WTC11 (cell line): ENCODE measurements at regions of chr22 and their contacts with region 1.

Region 1: DNA sequence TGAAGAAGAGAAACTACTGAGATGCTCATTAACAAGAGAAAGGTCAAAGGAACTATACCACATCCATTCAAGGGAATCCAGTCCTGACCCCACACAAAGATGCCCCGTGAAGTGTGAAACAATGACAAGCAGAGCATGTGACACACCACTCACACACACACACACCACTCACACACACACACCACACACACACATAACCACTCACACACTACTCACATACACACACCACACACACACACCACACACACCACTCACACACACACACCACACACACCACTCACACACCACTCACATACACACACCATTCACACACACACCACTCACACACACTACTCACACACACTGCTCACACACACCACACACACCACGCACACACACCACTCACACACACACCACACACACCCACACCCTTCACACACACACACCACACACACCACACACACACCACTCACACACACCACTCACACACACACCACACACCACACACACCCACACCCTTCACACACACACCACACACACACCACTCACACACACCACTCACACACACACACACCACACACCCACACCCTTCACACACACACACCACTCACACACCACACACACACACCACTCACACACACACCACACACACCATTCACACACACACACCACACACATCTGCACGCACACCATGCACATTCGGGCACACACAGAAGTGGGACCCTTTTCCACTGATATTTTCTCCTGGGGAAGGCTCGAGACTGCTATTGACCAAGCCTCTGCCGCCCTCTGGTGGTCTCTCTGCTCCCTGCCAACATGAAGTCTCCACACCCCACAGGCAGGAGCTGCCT is 32.0 kb upstream of the COMT start:
- DNase-seq: peak; percentile 90
- ATAC-seq: peak; percentile 87
- H3K4me3 Mint-ChIP-seq: no peak overlapping the region
- H3K27ac Mint-ChIP-seq: no peak overlapping the region; the same call in 1 of the 2 replicates
- H3K4me1 Mint-ChIP-seq: no peaks in the 10 kb centered on the region; the same call in 1 of the 2 replicates
- H3K27me3 Mint-ChIP-seq: no peaks in the 10 kb centered on the region
- CTCF ChIP-seq: peak; percentile 80

Region 2: DNA sequence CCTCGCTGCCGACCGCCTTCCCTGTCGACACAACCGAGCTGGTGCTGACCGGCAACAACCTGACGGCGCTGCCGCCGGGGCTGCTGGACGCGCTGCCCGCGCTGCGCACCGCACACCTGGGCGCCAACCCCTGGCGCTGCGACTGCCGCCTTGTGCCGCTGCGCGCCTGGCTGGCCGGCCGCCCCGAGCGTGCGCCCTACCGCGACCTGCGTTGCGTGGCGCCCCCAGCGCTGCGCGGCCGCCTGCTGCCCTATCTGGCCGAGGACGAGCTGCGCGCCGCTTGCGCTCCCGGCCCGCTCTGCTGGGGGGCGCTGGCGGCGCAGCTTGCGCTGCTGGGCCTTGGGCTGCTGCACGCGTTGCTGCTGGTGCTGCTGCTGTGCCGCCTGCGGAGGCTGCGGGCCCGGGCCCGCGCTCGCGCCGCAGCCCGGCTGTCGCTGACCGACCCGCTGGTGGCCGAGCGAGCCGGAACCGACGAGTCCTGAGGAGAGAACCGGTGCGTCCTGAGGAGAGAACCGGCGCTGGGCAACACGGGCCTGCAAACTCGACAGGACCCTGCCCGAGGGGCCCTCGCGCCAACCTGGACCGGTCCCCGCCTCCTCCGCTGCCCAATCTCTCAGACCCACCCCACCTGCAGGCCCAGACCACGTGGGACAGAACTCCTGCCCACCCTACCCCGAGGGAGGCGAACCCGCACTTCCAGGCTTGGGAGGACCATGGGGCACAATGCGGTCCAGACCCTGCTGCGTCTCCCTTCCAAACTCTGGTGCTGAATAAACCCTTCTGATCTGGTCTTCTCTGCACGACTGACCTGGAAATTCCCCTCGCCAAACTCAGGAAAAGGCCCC is 185.4 kb before region 1 on chr22:
- CTCF ChIA-PET with region 1: interaction called, 155 read pairs
- POLR2A ChIA-PET with region 1: no interaction called
- DNase-seq: peak; percentile 76
- ATAC-seq: peak; percentile 68
- H3K4me3 Mint-ChIP-seq: peak overlapping the region; percentile 53
- H3K27ac Mint-ChIP-seq: no peak overlapping the region
- H3K4me1 Mint-ChIP-seq: peaks cover 20% of the 10 kb centered on the region
- H3K27me3 Mint-ChIP-seq: peaks cover 95% of the 10 kb centered on the region
- CTCF ChIP-seq: peak; percentile 27; the same call in 1 of the 2 replicates

Region 3: GRCh38 chr22:19756288-19757128 is 153.1 kb before region 1 on chr22:
- CTCF ChIA-PET with region 1: interaction called, 25 read pairs
- POLR2A ChIA-PET with region 1: no interaction called
- DNase-seq: peak; percentile 70
- ATAC-seq: peak; percentile 5
- H3K4me3 Mint-ChIP-seq: peak overlapping the region; percentile 29; the same call in 1 of the 2 replicates
- H3K27ac Mint-ChIP-seq: no peak overlapping the region
- H3K4me1 Mint-ChIP-seq: peaks cover 24% of the 10 kb centered on the region
- H3K27me3 Mint-ChIP-seq: peaks cover 89% of the 10 kb centered on the region
- CTCF ChIP-seq: 0 out of 2 replicates have a peak, but pooled peaks have one; percentile 17

Region 4: GRCh38 chr22:19800761-19801244 is 108.8 kb before region 1 on chr22:
- CTCF ChIA-PET with region 1: interaction called, 15 read pairs
- POLR2A ChIA-PET with region 1: no interaction called
- DNase-seq: peak; percentile 58
- ATAC-seq: peak; percentile 71
- H3K4me3 Mint-ChIP-seq: no peak overlapping the region
- H3K27ac Mint-ChIP-seq: no peak overlapping the region
- H3K4me1 Mint-ChIP-seq: no peaks in the 10 kb centered on the region
- H3K27me3 Mint-ChIP-seq: no peaks in the 10 kb centered on the region
- CTCF ChIP-seq: no peak

Region 5: DNA sequence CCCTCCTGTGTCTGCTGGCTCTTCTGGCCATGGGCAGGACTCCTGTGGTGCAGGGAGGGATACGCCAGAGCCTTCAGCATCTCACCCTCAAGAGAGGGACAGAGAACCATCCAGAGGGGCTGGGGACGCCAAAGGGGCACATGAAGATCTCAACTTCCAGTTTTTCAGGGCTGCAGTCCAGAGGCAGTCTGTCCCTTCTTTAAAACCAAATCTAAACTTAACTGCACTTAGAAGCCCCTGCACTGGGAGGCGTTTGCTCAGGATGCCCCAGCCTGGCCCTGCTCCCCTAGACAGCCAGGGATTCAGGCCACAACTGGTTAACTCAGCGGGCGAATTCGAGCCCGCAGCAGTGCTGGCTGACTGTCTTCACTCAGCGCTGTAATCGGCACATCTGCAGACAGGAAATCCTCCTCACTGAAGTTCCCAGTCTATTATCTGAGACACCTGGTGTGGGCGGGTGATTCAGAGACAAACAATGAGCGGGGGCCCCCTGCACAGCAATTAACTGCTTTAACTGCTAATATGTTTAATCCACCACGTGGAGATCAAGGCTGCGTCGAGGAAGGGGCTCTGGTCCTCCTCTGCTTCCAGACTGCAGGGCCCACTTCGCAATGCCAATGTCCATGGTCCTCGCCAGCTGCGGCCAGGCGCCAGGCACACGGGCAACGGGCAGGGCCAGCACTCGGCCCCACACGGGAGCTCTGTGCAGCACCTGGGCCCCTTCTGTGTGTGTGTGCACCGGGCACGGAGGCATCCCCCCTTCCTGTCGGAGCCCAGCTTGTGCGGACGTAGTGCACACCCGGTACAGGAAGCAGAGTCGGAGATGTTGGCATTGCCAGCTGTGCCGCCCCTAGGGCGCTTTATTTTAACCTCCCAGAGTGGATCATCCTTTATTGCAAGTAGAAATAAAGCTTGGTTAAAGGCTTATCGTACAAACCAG is 18.0 kb before region 1 on chr22:
- CTCF ChIA-PET with region 1: interaction called, 25 read pairs
- POLR2A ChIA-PET with region 1: no interaction called
- DNase-seq: peak; percentile 64
- ATAC-seq: peak; percentile 86
- H3K4me3 Mint-ChIP-seq: no peak overlapping the region
- H3K27ac Mint-ChIP-seq: peak overlapping the region; percentile 74; the same call in 1 of the 2 replicates
- H3K4me1 Mint-ChIP-seq: peaks cover 29% of the 10 kb centered on the region
- H3K27me3 Mint-ChIP-seq: no peaks in the 10 kb centered on the region; the same call in 1 of the 2 replicates
- CTCF ChIP-seq: no peak

Region 6: GRCh38 chr22:19921544-19922081 is 12.0 kb after region 1 on chr22:
- CTCF ChIA-PET with region 1: interaction called, 13 read pairs
- POLR2A ChIA-PET with region 1: no interaction called
- DNase-seq: no peak
- ATAC-seq: no peak
- H3K4me3 Mint-ChIP-seq: no peak overlapping the region
- H3K27ac Mint-ChIP-seq: no peak overlapping the region; the same call in 1 of the 2 replicates
- H3K4me1 Mint-ChIP-seq: no peaks in the 10 kb centered on the region
- H3K27me3 Mint-ChIP-seq: no peaks in the 10 kb centered on the region
- CTCF ChIP-seq: no peak